OCI-LY7 (cell line): ENCODE measurements at regions of chr3 and their contacts with region 1.

Region 1: GRCh38 chr3:152268555-152269425 is at the start of gene MBNL1:
- DNase-seq: peak; percentile 94
- H3K4me3 ChIP-seq: peak within 1 kb of the TSS; percentile 79
- H3K27ac ChIP-seq: peak within 1 kb of the TSS; percentile 94
- H3K4me1 ChIP-seq: peaks cover 50% of the 10 kb centered on the region
- CTCF ChIP-seq: no peak
- total RNA-seq, gene MBNL1: 125 and 163 TPM in 2 replicates

Region 2: DNA sequence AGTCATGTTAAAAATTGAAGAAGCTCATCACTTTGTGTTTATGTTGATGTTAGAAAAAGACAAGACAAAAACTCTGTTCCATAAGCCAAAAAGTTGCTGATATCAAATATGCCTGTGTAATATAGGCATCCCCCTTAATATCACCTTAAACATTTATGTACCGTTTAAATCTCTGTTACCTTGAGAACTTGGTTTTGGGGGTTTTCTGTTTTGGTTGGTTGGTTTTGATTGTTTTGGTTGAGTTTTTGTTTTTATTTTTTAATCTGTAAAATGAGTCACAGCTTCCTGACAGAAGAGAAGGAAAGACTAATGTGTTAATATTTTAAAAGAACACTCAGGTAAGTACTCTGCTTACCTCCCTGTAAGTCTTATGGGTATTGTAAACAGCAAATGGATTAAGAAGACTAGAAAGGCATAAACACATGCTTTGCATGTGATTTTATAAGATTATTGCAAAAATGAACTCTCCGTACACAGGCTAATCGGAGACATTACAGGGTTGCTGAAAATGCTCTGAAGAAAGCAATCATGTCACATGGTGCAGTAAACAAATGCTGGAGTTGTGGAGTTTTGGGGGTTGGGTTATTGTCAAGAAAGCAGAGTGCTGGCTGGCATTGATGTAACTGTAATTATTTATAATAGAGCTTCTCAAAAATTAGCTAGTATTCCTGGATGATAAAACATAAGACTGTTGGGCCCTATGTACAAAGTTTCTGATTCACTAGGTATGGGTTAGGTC is 69.5 kb before region 1 on chr3:
- CTCF ChIA-PET with region 1: no interaction called
- POLR2A ChIA-PET with region 1: interaction called, 24 read pairs
- intact Hi-C with region 1: loop called (anchors 1 kb)
- DNase-seq: peak; percentile 45
- H3K4me3 ChIP-seq: peak overlapping the region; percentile 49
- H3K27ac ChIP-seq: peak overlapping the region; percentile 63
- H3K4me1 ChIP-seq: peaks cover 85% of the 10 kb centered on the region
- CTCF ChIP-seq: no peak

Region 3: DNA sequence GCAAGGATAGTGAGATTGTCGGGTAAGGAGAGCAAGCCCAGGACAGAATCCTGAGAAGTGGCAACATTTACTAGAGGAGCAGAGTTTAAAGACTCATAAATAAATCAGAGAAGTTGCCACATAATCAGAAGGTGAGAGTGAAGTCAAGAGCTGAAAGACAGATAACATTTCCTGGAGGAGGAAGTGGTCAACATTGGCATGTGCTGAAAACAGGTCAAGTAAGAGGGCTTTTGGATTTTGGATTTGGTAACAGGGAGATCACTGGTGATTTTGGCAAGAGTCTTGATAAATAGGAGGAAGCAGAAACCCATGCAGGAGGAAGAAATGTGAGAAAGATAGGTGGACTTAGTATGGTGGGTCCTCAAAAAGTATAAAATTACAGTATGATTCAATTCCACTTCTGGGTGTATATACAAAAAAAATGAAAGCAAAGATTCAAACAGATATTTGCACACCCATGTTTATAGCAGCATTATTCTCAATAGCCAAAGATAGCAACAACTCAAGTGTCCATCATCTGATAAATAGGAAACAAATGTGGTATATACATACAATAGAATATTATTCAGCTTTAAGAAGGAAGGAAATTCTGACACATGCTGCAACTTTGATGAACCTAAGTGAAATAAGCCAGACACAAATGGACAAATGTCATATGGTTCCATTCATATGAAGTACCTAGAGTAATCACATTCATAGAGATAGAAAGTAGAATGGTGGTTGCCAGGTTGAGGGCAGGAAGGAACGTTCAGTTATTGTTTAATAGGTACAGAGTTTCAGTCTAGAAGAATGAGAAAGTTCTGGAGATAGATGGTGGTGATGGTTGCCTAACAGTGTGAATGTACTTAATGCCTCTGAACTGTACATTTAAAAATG is 27.4 kb before region 1 on chr3:
- CTCF ChIA-PET with region 1: no interaction called
- POLR2A ChIA-PET with region 1: interaction called, 29 read pairs
- intact Hi-C with region 1: no loop called
- DNase-seq: no peak
- H3K4me3 ChIP-seq: no peak overlapping the region
- H3K27ac ChIP-seq: peak overlapping the region; percentile 8
- H3K4me1 ChIP-seq: peaks cover 69% of the 10 kb centered on the region
- CTCF ChIP-seq: no peak

Region 4: GRCh38 chr3:152281133-152281713 is 12.4 kb after region 1 on chr3:
- CTCF ChIA-PET with region 1: interaction called, 4 read pairs
- POLR2A ChIA-PET with region 1: interaction called, 79 read pairs
- intact Hi-C with region 1: no loop called
- DNase-seq: no peak
- H3K4me3 ChIP-seq: no peak overlapping the region
- H3K27ac ChIP-seq: no peak overlapping the region
- H3K4me1 ChIP-seq: peaks cover 94% of the 10 kb centered on the region
- CTCF ChIP-seq: no peak

Region 5: GRCh38 chr3:152444029-152444641 is 175.3 kb after region 1 on chr3:
- CTCF ChIA-PET with region 1: no interaction called
- POLR2A ChIA-PET with region 1: interaction called, 3 read pairs
- intact Hi-C with region 1: loop called (anchors 2 kb)
- DNase-seq: peak; percentile 71
- H3K4me3 ChIP-seq: no peak overlapping the region
- H3K27ac ChIP-seq: peak overlapping the region; percentile 3
- H3K4me1 ChIP-seq: peaks cover 19% of the 10 kb centered on the region
- CTCF ChIP-seq: peak; percentile 97